Activated CD8-positive, alpha-beta memory T cell treated with anti-CD3 and anti-CD28 coated beads, Interleukin-2, amount 10 ng/mL, durations not matched to agents 7 days and 5 days (primary cell): ENCODE measurements at regions of chr17 and their contacts with region 1.

Region 1: DNA sequence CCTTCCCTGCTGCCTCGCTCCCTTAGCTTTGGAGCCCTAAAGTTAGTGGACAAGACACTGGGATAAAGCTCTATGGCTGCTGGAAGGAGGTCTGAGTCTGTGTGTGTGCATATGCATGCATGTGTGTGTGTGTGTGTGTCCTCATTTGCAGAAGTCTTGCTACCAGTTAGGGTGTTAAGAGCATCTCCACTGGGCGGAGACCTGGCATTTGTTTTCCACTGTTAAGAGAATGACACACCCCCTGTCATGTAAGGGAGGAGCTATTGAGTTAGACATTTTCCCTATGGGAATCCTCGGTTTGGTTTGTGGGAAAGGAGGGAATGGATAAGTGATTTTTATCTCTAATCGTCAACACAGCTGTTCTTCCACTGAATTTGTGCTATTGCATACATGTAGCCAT is 24.8 kb upstream of the ARHGAP23 start:
- DNase-seq: no peak
- ATAC-seq: no peak
- H3K4me3 Mint-ChIP-seq: no peak overlapping the region
- H3K27ac Mint-ChIP-seq: no peak overlapping the region
- H3K4me1 Mint-ChIP-seq: peaks cover 6% of the 10 kb centered on the region
- H3K27me3 Mint-ChIP-seq: no peaks in the 10 kb centered on the region

Region 2: GRCh38 chr17:38415250-38416194 is 12.0 kb after region 1 on chr17:
- CTCF ChIA-PET with region 1: interaction called, 12 read pairs
- DNase-seq: no peak
- ATAC-seq: peak; percentile 34
- H3K4me3 Mint-ChIP-seq: no peak overlapping the region
- H3K27ac Mint-ChIP-seq: peak overlapping the region; percentile 71
- H3K4me1 Mint-ChIP-seq: peaks cover 5% of the 10 kb centered on the region
- H3K27me3 Mint-ChIP-seq: peaks cover 39% of the 10 kb centered on the region